H1 (cell line): ENCODE measurements at regions of chr21 and their contacts with region 1.

Region 1: DNA sequence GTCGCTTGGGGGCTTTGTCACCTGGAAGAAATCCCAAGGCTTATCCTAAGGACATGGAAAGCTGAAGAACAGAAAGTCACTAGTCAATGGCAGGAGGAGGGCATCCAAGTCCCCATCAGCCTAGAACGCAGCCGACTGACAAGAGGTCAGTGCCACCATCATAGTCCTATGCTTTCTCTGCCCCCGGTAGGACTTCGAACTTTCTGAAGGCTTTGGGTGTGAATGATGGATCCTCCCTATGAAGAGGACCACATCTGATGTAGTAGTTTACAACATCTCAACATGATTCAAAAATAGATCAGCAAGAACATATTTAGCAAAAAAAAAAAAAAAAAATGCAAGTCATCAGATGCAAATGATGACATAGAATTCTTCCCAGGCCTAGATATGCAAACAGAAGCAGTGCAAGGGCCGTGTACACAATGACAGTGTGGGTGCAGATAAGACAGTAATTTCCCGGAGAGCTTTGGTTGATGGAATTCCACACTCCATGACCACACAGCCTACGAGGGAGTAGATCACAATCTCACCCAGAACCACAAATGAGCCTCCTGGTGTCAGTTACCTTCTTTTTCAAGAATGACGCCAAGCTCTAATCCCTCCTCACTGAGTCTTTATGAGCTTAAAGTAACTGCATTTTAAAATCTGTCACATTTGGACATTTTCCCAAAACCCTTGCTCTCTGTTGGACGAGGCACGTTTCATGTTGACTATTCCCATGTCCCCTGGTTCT is 88.2 kb downstream of the PSMG1 start:
- DNase-seq: no peak
- H3K4me3 ChIP-seq: no peak overlapping the region
- H3K27ac ChIP-seq: no peak overlapping the region
- H3K4me1 ChIP-seq: peaks cover 0 to 7% (median 0%) of the 10 kb centered on the region in 4 experiments; a peak in 1 of 7 replicates
- H3K27me3 ChIP-seq: no peaks in the 10 kb centered on the region
- CTCF ChIP-seq: no peak
- EP300 ChIP-seq: no peak
- POLR2A ChIP-seq: no peak
- RAD21 ChIP-seq: no peak

Region 2: GRCh38 chr21:39083377-39084008 is 11.5 kb before region 1 on chr21:
- CTCF ChIA-PET with region 1: interaction called, 13 read pairs
- POLR2A ChIA-PET with region 1: interaction called, 3 read pairs
- DNase-seq: no peak
- H3K4me3 ChIP-seq: no peak overlapping the region
- H3K27ac ChIP-seq: no peak overlapping the region
- H3K4me1 ChIP-seq: peaks cover 0 to 6% (median 4%) of the 10 kb centered on the region in 4 experiments; a peak in 6 of 7 replicates
- H3K27me3 ChIP-seq: no peaks in the 10 kb centered on the region; a peak in 2 of 7 replicates
- CTCF ChIP-seq: no peak
- EP300 ChIP-seq: no peak
- POLR2A ChIP-seq: no peak
- RAD21 ChIP-seq: no peak